ENCODE measurements at regions of chr3 and their contacts with region 1.

Region 1: DNA sequence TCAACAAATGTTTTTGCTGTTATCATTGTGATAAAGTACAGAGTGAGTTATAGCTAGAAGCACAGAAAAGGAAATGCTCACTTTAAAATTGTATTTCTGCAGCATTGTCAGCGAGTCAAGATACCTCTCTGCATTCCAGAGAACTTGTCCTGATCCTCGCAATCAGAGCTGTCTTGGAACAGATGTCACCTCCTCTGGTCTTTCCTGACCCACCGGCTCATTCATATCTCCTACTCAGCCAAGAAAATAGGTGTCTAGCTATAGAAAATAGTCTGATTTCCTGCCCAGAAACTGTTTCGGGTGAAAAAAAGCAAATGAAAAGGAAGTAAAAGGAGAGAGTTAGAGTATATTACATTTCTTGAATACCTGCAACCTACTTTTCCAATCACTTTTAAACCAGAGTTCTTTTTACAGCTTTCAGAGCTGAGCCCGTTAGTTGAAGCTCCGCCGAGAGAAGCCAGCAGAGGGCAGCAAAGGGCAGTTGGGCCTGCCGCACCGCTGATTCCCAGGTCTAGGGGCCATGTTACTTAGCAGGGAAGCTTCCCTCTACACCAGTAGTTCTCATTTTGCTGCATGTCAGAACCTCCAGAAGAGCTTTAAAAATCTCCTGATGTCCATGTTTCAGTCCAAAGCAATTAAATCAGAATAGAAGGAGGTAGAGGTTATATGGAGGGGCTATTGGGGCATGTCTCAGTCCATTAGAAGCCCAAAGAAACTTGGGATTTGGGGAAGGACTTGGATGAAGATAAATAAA is 185.7 kb upstream of the THRB start:
- DNase-seq: peak; percentile 66
- ATAC-seq: peak; percentile 78 to 86

Region 2: GRCh38 chr3:23999012-23999641 is 681.3 kb before region 1 on chr3:
- intact Hi-C with region 1: loop called (anchors 5 to 10 kb)
- DNase-seq: peak; percentile 76
- ATAC-seq: peak; percentile 33 to 41

Region 3: DNA sequence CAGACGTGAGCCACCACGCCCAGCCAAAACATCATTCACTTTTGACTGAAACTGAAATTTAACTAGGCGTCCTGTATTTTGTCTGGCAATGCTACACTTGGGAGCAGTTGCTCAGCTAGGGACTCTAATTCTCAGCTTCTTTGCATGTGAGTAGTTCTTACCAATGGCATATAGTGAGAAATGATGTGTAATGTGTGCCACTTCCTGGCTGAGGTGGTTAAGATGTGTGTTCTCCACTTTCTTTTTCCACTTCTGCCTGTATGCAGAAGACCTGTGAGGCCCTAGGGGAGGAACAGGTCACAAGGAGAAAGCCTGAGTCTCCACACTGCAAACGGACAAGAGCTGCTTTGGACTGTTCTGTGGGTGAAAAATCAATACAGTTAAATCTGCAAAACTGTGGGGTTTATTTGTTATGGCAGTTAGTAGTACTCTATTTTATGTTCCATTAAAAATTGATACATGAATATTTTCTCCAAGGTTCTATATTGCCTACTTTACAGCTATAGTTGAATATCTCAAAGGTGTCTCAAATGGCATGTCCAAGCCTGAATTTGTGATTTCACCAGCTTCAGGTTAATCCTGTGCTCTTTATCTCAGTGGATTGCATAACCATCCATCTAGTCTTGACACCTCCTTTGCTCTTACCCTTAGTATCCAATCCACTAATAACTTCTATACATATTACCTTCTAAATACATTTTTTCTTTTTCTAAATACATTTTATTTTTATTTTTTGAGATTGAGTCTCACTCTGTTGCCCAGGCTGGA is 676.0 kb before region 1 on chr3:
- intact Hi-C with region 1: loop called (anchors 5 to 10 kb)
- DNase-seq: no peak
- ATAC-seq: no peak

Region 4: GRCh38 chr3:24185738-24186384 is 494.5 kb before region 1 on chr3:
- intact Hi-C with region 1: loop called in 1 of 2 experiments (anchors 10 kb)
- DNase-seq: peak; percentile 38
- ATAC-seq: peak; percentile 61 to 70

Region 5: DNA sequence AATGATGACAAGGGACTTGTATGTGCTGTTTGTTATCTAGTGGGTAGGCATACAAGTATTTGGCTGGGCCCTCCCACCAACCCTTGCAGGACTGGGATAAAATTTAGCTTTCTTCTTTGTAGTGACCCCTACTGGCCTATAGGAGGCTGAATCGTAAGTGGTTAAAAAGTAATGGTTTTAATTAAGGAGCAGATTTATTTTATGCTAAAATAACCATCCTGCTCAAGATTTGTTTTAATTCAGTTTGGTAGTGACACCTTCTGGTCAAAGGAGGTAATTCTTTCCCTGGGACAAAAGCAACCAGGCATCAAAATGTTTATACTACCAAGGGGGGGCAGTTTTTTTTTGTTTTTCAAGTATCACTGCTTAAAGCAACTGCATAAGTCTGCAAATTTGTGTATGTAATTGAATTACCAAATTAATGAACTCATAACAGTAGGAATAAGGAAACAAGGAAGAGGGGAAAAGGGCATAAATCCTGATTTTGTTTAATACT is 913.7 kb after region 1 on chr3:
- intact Hi-C with region 1: no loop called
- DNase-seq: peak; percentile 39
- ATAC-seq: peak; percentile 55 to 58